Panc1 (cell line): ENCODE measurements at regions of chr16 and their contacts with region 1.

Region 1: GRCh38 chr16:31713071-31713944 is 160.3 kb upstream of the ZNF267 start:
- DNase-seq: peak; percentile 61
- ATAC-seq: peak; percentile 97
- H3K4me3 ChIP-seq: peak overlapping the region; percentile 92 to 95
- H3K27ac ChIP-seq: peak overlapping the region; percentile 97
- H3K4me1 ChIP-seq: peaks cover 6% of the 10 kb centered on the region
- H3K27me3 ChIP-seq: no peaks in the 10 kb centered on the region
- CTCF ChIP-seq: no peak

Region 2: DNA sequence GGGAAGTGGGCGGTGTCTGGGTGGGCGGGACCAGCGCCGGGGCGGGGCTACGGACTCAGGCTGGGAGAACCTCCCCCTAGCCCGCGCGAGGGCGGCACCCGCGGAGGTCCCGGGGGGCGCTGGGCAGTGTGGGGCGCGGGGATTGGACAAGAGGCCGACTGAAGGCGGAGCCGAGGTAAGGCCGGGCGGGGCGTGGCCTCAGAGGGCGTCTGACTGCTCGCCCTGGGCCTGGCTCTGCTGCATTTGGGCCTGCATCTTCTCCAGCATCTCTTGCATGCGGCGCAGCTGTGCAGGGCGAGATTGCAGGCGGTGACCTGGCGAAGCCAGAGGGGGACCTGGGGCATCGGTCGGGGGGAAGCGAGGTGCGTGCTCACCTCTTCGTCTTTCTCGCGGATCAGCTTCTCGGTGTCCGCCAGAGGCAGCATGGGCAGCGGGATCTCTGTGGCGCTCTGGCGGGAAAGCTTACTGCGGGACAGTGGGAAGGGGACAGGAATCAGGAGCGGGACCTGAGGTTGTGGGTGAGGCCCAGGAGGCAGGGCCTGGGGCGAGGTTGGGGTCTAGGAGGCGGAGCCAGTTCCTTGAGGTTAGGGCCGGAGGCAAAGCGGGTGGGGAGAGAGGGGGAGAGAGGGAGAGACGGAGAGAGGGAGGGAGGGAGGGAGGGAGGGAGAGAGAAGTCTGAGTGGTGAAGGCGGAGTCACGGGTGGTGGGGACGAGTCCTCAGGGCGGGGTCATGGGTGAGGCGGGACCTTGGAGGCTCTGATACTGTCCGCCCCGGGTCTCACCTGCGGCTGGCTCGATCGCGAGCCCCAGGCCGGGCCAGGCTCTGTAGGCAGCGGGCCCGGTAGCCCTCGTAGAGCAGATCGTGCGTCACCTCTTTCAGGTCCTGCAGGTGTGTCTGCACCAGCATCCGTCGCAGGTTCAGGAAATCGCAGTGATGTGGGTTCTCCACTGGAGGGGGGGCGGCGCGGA is 1334.8 kb before region 1 on chr16:
- CTCF ChIA-PET with region 1: no interaction called
- POLR2A ChIA-PET with region 1: interaction called, 10 read pairs
- in situ Hi-C with region 1: no loop called
- intact Hi-C with region 1: no loop called
- DNase-seq: no peak
- ATAC-seq: peak; percentile 96
- H3K4me3 ChIP-seq: peak overlapping the region; percentile 89 to 96
- H3K27ac ChIP-seq: peak overlapping the region; percentile 90
- H3K4me1 ChIP-seq: peaks cover 7% of the 10 kb centered on the region
- H3K27me3 ChIP-seq: no peaks in the 10 kb centered on the region
- CTCF ChIP-seq: no peak

Region 3: DNA sequence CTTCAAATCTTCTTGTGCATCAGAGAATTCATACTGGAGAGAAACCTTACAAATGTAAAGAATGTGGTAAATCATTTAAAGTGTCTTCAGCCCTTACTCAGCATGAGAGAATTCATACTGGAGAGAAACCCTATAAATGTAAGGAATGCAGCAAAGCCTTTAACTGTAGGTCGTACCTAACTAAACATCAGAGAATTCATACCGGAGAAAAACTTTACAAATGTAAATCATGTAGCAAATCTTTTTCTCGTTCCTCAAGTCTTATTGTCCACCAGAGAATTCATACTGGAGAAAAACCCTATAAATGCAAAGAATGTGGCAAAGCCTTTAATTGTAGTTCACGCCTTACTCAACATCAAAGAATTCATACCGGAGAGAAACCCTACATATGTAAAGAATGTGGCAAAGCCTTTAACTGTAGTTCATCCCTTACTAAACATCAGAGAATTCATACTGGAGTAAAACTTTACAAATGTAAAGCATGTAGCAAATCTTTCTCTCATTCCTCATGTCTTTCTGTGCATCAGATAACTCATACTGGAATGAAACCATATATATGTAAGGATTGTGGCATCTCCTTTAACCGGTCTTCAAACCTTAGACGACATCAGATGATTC is 41.8 kb after region 1 on chr16:
- CTCF ChIA-PET with region 1: no interaction called
- POLR2A ChIA-PET with region 1: no interaction called
- in situ Hi-C with region 1: no loop called
- intact Hi-C with region 1: no loop called
- DNase-seq: no peak
- ATAC-seq: no peak
- H3K4me3 ChIP-seq: no peak overlapping the region
- H3K27ac ChIP-seq: no peak overlapping the region
- H3K4me1 ChIP-seq: no peaks in the 10 kb centered on the region
- H3K27me3 ChIP-seq: no peaks in the 10 kb centered on the region
- CTCF ChIP-seq: no peak

Region 4: GRCh38 chr16:31868691-31869167 is 155.4 kb after region 1 on chr16:
- CTCF ChIA-PET with region 1: interaction called, 13 read pairs
- POLR2A ChIA-PET with region 1: interaction called, 3 read pairs
- in situ Hi-C with region 1: no loop called
- intact Hi-C with region 1: loop called (anchors 10 kb)
- DNase-seq: peak; percentile 48
- ATAC-seq: peak; percentile 79
- H3K4me3 ChIP-seq: no peak overlapping the region
- H3K27ac ChIP-seq: no peak overlapping the region
- H3K4me1 ChIP-seq: no peaks in the 10 kb centered on the region
- H3K27me3 ChIP-seq: no peaks in the 10 kb centered on the region
- CTCF ChIP-seq: peak; percentile 81